Activated CD4-positive, alpha-beta memory T cell treated with anti-CD3 and anti-CD28 coated beads for 36 hours (primary cell): ENCODE measurements at regions of chr7 and their contacts with region 1.

Region 1: GRCh38 chr7:23404546-23405239 is 65.6 kb downstream of the IGF2BP3 start:
- DNase-seq: peak; percentile 51
- H3K4me3 Mint-ChIP-seq: peak overlapping the region; percentile 0
- H3K27ac Mint-ChIP-seq: peak overlapping the region; percentile 90
- H3K4me1 Mint-ChIP-seq: peaks cover 31% of the 10 kb centered on the region
- H3K27me3 Mint-ChIP-seq: peaks cover 5% of the 10 kb centered on the region

Region 2: DNA sequence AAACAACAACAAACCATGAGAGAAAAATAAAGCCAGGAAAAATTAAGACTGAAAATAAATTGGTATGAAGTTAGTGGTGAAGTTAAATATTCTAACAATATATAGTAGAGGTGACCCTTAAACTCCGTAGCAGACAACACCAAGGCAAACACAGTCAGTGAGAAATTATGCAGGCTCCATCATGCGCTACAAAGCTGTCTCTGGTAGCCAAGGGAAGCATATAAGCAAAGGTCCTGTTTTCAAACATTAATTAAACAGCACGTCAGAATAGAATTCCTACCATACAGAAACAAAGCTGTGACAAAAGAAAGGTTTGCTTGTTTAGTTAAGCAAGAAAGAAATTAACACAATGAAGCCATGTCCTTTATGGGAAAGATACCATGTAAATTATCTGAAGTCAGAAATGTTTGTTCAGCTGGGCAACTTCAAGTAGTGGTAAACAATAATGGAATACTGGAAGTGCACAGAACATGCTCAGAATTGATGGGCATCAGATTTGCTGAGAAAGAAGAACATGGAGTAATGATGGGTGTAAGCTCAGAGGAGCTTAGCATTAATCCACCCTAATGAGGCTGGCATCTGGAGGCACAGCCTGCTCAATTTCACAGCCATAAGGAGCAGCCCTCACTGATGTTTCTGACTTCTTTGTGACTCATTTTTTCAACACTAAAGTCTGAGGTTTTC is 10.1 kb before region 1 on chr7:
- CTCF ChIA-PET with region 1: interaction called, 3 read pairs
- POLR2A ChIA-PET with region 1: interaction called, 3 read pairs
- intact Hi-C with region 1: loop called (anchors 1 kb)
- DNase-seq: no peak
- H3K4me3 Mint-ChIP-seq: no peak overlapping the region
- H3K27ac Mint-ChIP-seq: no peak overlapping the region
- H3K4me1 Mint-ChIP-seq: peaks cover 20% of the 10 kb centered on the region
- H3K27me3 Mint-ChIP-seq: peaks cover 7% of the 10 kb centered on the region